ENCODE measurements at regions of chr4 and their contacts with region 1.

Region 1: DNA sequence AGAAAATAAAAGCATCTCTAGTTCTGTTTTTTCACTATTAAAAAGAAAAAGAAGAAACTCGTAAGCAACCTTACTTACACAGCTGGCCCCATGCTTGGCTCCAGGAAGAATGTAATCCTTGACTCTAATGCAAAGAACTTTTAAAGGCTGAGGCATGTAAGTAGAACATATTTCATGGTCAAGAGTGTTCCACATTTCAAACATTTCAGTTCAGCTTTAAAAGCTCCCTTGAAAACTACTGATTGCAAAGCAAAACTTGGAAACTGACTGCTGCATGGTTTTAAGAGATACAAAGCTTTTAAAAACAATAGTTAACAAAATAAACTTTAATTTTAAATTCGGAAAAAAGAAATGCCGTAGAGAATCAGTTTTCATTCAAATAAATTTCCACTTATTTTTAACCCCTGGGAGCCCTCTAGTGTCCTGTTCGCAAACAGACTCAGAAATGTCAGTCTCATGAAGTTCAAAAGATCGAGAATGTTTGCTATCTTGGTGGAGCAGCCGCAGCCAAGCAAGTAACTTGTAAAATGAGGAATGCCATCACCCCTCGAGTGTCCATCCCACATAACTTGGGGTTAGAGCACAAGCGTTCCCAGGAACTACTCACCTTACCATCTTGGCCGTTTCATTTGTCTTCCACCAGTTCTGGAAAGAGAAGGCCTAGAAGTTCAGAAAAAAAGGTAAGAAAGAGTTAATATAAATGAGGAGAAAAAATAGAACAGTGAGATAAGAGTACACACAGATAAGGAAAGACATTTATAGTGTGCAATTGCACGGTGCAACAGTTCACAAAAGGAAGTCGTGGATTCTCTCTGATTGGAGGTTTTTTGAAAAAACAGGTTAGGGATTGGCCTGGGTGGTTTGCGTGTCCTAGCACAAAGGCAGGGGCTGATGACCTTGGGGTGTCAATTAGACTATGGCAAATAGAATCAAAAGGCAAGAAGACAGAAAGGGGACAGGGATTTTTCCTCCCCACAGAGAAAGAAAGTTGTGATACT is at the start of gene GASK1B:
- DNase-seq: no peak
- H3K4me3 ChIP-seq: peak within 1 kb of the TSS; percentile 22
- H3K27me3 ChIP-seq: no peaks in the 10 kb centered on the region
- CTCF ChIP-seq: peak; percentile 71
- polyA plus RNA-seq, gene GASK1B: 4.9 and 11.6 TPM in 2 replicates

Region 2: GRCh38 chr4:157996061-157997028 is 176.2 kb before region 1 on chr4:
- CTCF ChIA-PET with region 1: interaction called, 18 read pairs
- POLR2A ChIA-PET with region 1: interaction called, 4 read pairs
- DNase-seq: no peak
- H3K4me3 ChIP-seq: no peak overlapping the region
- H3K27me3 ChIP-seq: no peaks in the 10 kb centered on the region
- CTCF ChIP-seq: no peak

Region 3: DNA sequence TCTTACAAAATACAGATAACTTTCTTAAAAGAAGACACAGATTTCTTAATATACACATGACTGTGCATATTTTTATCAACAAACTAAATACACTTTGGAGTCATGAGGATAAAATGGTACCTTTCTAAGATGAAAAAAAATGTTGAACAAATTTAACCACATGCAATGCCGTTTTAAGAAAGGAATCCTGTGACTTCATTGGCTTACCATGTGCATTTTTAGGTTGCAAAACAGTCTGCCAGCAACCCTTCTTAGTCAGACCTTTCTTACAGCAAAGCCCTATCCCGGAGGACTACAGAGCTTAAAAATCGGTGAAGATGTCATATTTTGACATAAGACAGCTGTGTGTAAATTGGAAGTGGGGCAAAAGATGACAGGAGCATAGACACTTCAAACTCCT is 51.4 kb before region 1 on chr4:
- CTCF ChIA-PET with region 1: interaction called, 12 read pairs
- POLR2A ChIA-PET with region 1: no interaction called
- DNase-seq: peak; percentile 92
- H3K4me3 ChIP-seq: no peak overlapping the region; the same call in 1 of the 2 replicates
- H3K27me3 ChIP-seq: no peaks in the 10 kb centered on the region
- CTCF ChIP-seq: no peak

Region 4: GRCh38 chr4:158193171-158193749 is 20.7 kb after region 1 on chr4:
- CTCF ChIA-PET with region 1: interaction called, 10 read pairs
- POLR2A ChIA-PET with region 1: no interaction called
- DNase-seq: no peak
- H3K4me3 ChIP-seq: no peak overlapping the region
- H3K27me3 ChIP-seq: no peaks in the 10 kb centered on the region; the same call in 1 of the 2 replicates
- CTCF ChIP-seq: peak; percentile 63

Measured in BJ (cell line).